ENCODE measurements at regions of chr17 and their contacts with region 1.

Region 1: DNA sequence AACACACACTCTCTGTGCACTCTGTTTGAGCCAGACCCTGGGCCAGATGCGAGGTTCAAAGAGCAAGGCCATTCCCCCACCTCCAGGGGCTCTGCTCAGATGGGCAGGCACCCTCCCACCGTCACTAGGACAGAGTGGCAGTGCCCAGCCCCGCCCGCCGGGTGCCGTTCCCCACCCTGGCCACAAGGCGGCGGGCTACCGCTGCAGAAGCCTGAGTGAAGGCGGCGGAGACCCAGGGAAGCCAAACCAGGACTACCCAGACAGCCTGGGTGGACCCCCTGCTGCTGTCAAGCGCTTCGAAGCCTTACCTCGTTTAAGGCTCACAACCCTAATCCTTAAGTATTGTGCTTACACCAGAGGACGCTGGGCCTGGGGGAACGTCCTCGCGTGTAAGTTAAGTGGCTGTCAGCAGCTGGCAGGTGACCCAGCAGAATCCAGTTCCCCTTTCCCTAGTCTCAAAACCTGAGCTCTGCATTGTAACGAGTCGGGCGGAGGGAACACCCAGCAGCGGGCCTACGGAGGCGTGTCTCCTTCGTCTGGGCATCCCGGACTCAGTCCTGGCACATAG is 4.5 kb downstream of the ARHGAP27 start:
- DNase-seq: peak; percentile 88
- ATAC-seq: peak; percentile 73
- H3K4me3 Mint-ChIP-seq: peak overlapping the region; percentile 84
- H3K27ac Mint-ChIP-seq: peak overlapping the region; percentile 92
- H3K4me1 Mint-ChIP-seq: peaks cover 35% of the 10 kb centered on the region
- H3K27me3 Mint-ChIP-seq: no peaks in the 10 kb centered on the region
- CTCF ChIP-seq: peak; percentile 96

Region 2: DNA sequence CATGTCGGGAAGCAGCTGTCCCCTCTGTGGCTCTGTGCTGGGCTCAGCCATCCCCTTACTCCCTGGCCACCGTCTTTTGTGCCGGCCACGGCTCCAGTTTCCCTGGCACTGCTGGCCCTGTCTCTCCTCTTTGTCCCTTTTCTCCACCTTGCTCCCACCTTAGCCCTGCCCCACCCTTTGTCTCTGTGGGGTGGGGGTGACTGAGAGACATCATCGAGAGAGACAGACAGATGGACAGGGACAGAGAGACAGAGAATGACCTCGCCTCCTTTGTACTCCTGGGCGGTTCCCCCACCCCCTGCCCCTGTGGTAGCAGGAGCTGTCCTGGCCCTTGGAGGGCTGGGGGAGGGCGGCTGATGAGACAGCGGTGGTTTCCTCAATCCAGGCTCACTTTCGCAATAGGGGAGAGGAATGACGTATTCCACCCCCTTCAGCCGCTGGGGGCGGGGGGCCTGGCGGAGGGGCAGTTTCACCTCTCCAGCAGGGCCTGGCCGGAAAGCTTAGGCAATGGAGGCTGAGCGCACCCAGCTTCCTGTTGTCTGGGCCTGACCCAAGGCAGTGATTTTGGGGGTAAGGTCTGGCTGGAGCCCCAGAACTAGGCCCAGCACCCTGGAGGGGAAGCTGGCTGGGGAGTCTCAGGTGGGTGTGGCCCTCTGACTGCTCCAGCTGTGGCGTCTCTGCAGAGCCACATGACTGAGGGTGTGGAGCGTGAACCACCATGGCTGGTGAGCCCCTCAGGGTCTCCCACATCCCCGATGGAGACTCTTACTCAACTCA is 199.2 kb before region 1 on chr17:
- CTCF ChIA-PET with region 1: no interaction called
- POLR2A ChIA-PET with region 1: interaction called, 3 read pairs
- intact Hi-C with region 1: loop called (anchors 2 kb)
- DNase-seq: peak; percentile 84
- ATAC-seq: peak; percentile 45
- H3K4me3 Mint-ChIP-seq: peak overlapping the region; percentile 79
- H3K27ac Mint-ChIP-seq: peak overlapping the region; percentile 99
- H3K4me1 Mint-ChIP-seq: peaks cover 97% of the 10 kb centered on the region
- H3K27me3 Mint-ChIP-seq: no peaks in the 10 kb centered on the region
- CTCF ChIP-seq: no peak

Region 3: DNA sequence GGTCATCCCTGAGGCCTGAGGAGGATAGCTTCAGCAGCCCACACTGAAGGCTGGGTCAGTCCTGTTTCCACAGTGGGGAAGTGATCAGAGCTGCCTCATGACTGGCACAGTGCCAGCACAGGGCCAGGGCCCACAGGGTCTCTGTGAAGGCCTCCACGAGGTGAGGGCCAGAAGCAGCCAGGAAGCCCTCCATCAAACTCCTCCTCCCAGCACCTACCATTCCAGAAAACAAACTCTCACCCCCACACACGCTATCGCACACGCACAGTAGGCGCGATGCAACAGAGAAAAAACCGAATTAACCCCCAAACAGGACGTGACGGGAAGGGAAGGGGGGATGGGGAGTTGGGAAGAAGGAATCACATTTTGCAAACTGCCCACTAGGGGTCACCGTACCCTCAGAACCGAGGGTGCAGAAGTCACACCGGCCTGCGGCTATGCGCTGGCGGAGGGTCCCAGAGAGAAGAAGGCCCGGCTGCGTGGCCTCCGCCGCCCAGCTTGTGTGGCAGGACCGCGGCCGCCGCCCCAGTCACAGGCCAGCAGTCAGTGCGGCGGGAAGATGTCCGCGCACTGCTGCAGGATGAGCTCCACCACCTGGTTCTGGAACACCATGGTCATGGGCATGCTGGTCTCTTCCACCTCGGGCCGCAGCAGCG is 33.1 kb before region 1 on chr17:
- CTCF ChIA-PET with region 1: interaction called, 6 read pairs
- POLR2A ChIA-PET with region 1: no interaction called
- intact Hi-C with region 1: loop called (anchors 1 kb)
- DNase-seq: no peak
- ATAC-seq: peak; percentile 79
- H3K4me3 Mint-ChIP-seq: no peak overlapping the region
- H3K27ac Mint-ChIP-seq: no peak overlapping the region
- H3K4me1 Mint-ChIP-seq: no peaks in the 10 kb centered on the region
- H3K27me3 Mint-ChIP-seq: no peaks in the 10 kb centered on the region
- CTCF ChIP-seq: peak; percentile 42

Region 4: DNA sequence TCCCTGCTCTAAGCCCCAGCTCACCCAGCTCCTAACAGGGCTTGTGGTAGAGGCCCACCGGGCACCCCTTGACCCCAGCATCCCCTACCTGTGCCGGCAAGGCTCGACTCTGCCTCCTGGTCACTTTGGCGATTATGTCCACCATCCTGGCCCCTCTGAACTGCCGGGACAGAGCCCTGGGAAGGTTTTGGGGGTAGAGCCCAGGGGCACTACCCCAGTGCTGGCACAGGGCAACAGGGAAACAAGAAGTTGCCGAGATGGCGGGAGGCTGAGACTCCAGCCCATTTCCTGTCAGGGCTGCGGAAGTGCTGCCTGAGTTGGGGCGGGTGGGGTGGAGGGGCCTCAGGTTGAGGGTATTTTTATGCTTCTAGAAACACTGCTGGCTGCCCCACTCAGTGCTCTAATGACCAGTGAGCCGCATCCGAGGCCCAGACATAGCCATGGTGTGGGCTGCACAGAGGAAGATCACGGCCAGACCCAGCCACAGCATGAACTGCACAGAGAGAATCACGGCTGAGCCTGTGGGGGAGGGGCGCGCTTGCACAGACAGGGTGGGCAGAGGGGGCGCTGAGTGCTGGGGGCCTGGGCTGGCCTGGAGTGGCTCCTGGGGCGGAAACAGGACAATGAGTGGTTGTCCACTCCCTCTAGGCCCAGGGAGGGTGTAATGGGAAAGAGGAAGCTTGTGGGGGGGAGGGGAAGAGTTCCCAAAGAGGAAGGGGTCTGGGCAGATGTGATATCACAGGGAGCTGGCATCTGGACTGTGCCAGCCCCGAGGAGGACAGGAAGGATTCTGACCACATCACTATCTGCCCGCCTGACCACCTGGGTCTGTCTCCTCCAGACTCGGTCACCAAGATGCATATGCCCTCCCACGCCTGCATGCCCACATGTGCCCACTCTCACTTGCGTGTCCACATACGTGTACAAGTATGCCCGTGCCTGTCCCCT is 17.7 kb before region 1 on chr17:
- CTCF ChIA-PET with region 1: interaction called, 5 read pairs
- POLR2A ChIA-PET with region 1: interaction called, 12 read pairs
- intact Hi-C with region 1: loop called (anchors 1 kb)
- DNase-seq: peak; percentile 62
- ATAC-seq: peak; percentile 63
- H3K4me3 Mint-ChIP-seq: peak overlapping the region; percentile 99
- H3K27ac Mint-ChIP-seq: peak overlapping the region; percentile 99
- H3K4me1 Mint-ChIP-seq: peaks cover 86% of the 10 kb centered on the region
- H3K27me3 Mint-ChIP-seq: no peaks in the 10 kb centered on the region
- CTCF ChIP-seq: no peak

Region 5: DNA sequence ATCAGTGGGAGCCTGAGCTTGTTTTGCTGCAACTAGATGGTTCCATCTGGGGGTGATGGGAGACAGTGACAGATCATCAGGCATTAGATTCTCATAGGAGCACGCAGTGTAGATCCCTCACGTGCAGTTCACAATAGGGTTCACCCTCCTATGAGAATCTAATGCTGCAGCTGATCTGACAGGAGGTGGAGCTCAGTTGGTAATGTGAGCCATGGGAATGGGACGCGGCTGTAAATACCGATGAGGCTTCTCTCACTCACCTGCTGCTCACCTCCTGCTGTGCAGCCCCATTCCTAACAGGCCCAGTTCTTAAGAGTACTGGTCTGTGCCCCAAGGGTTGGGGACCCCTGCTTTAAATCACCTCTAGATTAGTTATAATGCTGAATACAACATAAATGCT is 199.9 kb after region 1 on chr17:
- CTCF ChIA-PET with region 1: no interaction called
- POLR2A ChIA-PET with region 1: no interaction called
- intact Hi-C with region 1: no loop called
- DNase-seq: no peak
- ATAC-seq: no peak
- H3K4me3 Mint-ChIP-seq: no peak overlapping the region
- H3K27ac Mint-ChIP-seq: no peak overlapping the region
- H3K4me1 Mint-ChIP-seq: no peaks in the 10 kb centered on the region
- H3K27me3 Mint-ChIP-seq: no peaks in the 10 kb centered on the region
- CTCF ChIP-seq: no peak